Posterior vena cava (tissue), 2 donors: ENCODE measurements at regions of chr4 and their contacts with region 1.

Region 1: GRCh38 chr4:144663834-144664475 is 18.0 kb downstream of the HHIP start:
- DNase-seq: no peak

Region 2: DNA sequence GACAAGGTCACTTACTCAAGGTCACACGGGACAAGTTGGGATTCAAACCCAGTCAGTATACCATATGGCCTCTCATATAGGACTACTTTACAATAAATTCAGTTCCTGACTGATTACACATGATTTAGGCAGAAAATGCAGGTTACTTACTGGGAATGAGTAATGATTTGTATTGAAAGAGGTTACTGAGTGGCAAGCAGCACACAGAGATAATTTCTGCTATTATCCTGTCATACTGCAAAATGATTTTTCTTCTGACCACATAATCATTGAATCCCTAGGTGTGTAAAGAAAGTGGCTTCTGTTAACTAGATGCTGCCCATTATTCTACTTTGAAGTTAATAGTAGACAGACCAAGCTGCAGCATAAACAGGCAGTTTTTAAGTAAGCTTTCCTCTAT is 971.7 kb before region 1 on chr4:
- intact Hi-C with region 1: loop called in 1 of 2 experiments (anchors 5 kb)
- DNase-seq: no peak

Region 3: GRCh38 chr4:144461906-144462305 is 202.0 kb before region 1 on chr4:
- intact Hi-C with region 1: no loop called
- DNase-seq: no peak

Region 4: DNA sequence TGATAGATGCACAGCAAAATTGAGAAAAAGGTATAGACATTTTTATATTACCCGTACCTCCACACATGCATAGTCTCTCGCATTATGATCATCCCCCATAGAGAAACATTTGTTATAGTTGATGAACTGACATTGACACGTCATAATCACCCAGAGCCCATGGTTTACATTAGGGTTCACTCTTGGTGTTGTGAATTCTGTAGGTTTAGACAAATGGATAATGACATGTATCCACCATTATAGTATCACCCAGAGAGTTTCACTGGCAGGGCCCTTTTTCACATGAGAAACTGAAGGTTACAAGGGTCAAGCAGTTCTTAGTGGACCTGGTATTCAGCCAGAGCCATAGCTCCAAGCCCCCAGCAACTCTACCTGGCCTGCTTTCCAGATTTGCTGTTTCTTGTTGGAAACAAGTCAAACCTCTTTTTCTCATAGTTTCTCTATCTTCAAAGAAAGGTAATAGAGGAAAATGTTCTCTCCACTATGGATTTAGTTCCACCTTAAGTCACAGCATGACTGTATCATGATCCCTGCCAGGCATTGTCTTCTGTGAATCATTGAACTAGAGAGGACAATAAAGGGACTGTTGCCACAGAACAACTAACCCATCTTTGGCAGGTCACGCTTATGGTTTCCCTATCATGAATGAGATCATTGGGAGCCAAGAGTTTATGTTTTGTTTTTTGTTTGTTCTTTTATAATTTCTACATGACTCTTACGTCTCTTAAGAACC is 46.0 kb after region 1 on chr4:
- intact Hi-C with region 1: no loop called
- DNase-seq: no peak